ENCODE measurements at regions of chr12 and their contacts with region 1.

Region 1: GRCh38 chr12:19739183-19739776 is 300.0 kb downstream of the AEBP2 start:
- DNase-seq: peak; percentile 51
- H3K4me3 Mint-ChIP-seq: no peak overlapping the region
- H3K27ac Mint-ChIP-seq: no peak overlapping the region
- H3K4me1 Mint-ChIP-seq: peaks cover 28% of the 10 kb centered on the region
- H3K27me3 Mint-ChIP-seq: no peaks in the 10 kb centered on the region
- CTCF ChIP-seq: peak; percentile 51

Region 2: GRCh38 chr12:19893514-19893913 is 154.2 kb after region 1 on chr12:
- CTCF ChIA-PET with region 1: interaction called, 8 read pairs
- intact Hi-C with region 1: loop called (anchors 1 kb)
- DNase-seq: no peak
- H3K4me3 Mint-ChIP-seq: no peak overlapping the region
- H3K27ac Mint-ChIP-seq: no peak overlapping the region
- H3K4me1 Mint-ChIP-seq: peaks cover 16% of the 10 kb centered on the region
- H3K27me3 Mint-ChIP-seq: no peaks in the 10 kb centered on the region
- CTCF ChIP-seq: no peak

Region 3: DNA sequence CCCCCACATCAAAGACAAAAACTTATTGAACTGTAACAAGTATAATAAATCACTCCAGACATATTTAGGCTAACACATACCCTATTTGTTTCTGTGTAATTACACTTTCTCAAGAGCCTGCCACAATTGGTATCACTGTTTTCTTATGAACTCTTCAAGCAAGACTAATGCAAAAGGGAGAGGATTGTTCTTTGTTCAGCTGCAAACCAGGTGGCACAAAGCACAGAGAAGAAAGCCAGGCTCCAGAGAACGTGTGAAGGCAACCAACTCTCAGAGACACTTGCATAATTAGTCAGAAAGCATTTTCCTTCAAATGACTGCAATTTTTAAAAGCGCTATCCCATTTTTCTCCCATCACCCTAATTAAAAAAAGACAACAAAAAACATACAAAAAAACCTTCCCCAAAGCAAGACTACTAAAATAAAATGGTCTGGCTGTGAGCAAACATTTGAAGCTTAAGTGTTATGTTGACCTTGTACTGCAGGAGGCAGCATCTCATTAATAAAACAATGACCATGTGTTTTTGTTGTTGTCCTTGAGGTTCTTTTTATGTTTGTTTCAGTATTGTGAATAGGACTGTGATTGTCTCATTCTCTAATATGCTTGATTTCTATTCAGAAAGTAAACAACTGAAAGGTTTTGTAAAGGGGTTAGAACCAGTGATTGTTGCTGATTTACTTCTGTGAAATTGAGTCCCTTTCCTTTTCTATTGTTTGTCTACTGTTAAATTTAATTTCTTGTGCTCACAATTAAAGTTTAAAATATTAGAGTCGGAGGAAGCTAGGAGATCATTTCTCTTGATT is 176.3 kb after region 1 on chr12:
- CTCF ChIA-PET with region 1: interaction called, 3 read pairs
- intact Hi-C with region 1: loop called (anchors 5 kb)
- DNase-seq: peak; percentile 32
- H3K4me3 Mint-ChIP-seq: no peak overlapping the region
- H3K27ac Mint-ChIP-seq: peak overlapping the region; percentile 41
- H3K4me1 Mint-ChIP-seq: peaks cover 44% of the 10 kb centered on the region
- H3K27me3 Mint-ChIP-seq: no peaks in the 10 kb centered on the region
- CTCF ChIP-seq: peak; percentile 63

Region 4: DNA sequence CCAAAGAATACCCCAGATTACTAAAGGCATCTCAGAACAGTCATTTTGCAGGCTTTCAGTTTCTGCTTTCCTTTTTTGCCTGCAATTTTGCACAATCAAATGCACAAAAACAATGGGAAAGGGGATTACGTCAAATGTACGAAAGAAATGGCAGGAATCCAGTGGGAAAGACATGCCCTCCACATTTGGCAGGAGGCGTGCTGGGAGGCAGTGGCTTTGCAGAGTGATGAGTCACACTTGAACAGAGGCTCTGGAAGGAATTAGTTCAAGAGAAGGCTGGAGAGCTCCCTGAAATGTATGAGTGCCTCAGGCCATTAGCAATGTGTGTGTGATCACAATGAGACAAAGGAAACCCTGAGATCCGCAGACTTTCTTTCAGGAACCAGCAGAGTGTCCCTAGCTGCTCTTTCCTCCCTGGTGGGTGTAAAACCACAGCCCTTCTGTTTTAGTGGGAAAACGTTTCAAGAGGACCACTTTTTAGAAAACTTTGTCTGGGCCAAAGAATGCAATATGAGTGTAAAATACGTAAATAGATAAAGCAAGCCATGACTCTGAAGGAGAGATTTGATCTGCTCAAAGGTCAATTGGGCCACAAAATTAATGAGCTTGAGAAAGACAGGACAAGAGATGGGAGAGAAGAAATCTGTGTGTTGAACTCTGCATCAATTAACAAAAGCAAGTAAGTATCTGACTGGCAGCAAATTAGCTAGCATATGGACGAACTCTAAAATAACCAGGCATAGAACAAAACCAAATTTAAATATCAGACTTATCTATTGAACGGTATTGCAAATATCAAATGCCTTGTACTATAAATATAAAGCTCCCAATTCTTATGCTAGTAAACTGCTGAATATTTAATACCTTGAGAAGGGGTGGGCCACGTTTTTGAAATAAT is 473.6 kb after region 1 on chr12:
- CTCF ChIA-PET with region 1: no interaction called
- intact Hi-C with region 1: loop called (anchors 5 kb)
- DNase-seq: peak; percentile 63
- H3K4me3 Mint-ChIP-seq: peak overlapping the region; percentile 34
- H3K27ac Mint-ChIP-seq: peak overlapping the region; percentile 78
- H3K4me1 Mint-ChIP-seq: peaks cover 22% of the 10 kb centered on the region
- H3K27me3 Mint-ChIP-seq: no peaks in the 10 kb centered on the region
- CTCF ChIP-seq: no peak

Region 5: DNA sequence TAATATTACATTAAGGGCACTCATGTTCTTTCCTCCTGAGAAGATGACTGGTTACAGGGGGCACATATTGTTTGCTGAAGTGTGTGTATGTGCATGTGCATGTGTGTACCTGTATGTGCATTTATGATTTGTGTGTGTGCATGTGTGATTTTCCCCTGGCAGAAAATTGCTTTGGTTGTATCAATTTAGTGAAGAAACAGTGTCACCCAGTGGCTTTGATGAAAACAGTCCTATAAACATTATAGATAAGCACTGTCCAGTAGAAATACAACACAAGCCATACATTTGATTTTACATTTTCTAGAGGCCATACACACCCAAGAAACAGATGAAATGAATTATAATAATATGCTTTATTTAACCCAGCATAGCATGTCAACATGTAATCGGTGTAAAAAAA is 637.7 kb after region 1 on chr12:
- CTCF ChIA-PET with region 1: no interaction called
- intact Hi-C with region 1: loop called (anchors 1 kb)
- DNase-seq: peak; percentile 24
- H3K4me3 Mint-ChIP-seq: no peak overlapping the region
- H3K27ac Mint-ChIP-seq: no peak overlapping the region
- H3K4me1 Mint-ChIP-seq: peaks cover 36% of the 10 kb centered on the region
- H3K27me3 Mint-ChIP-seq: no peaks in the 10 kb centered on the region
- CTCF ChIP-seq: no peak

Measured in Calu3 (cell line).